IMR-90 (cell line): ENCODE measurements at regions of chr4 and their contacts with region 1.

Region 1: DNA sequence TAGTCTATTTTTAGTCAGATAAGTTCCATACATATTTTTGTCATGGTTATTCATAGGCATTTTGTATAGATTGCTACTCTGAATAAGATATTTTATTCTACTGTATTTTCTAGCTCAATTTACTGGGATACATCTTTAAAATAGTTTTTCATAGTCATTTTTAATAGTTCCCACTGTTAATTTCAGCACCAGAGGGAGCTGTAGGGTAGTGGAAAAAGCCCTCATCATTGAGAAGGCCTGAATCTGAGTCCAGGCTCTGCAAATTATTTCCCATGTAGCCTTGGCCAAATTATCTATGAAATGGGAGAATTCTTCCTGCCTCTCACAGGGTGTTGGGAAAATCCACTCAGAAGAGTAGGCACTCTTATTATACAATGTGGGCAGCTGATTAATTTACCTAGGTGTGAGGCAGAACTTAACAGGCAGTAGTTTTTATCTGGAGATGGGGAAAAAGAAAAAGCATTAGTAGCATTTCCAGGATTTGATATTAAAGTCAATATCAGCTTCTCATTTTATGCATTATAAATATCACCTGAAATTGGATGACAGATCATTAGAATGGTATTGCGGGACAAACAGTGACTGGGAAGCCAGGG is 102.9 kb upstream of the PAQR3 start:
- DNase-seq: peak; percentile 22
- ATAC-seq: no peak; the same call in 1 of the 2 replicates
- H3K4me3 ChIP-seq: no peak overlapping the region
- H3K27ac ChIP-seq: no peak overlapping the region
- H3K4me1 ChIP-seq: no peaks in the 10 kb centered on the region
- H3K27me3 ChIP-seq: no peaks in the 10 kb centered on the region
- CTCF ChIP-seq: peak; percentile 48
- POLR2A ChIP-seq: no peak
- RAD21 ChIP-seq: peak; percentile 54

Region 2: GRCh38 chr4:79185526-79186045 is 143.4 kb after region 1 on chr4:
- CTCF ChIA-PET with region 1: no interaction called
- POLR2A ChIA-PET with region 1: no interaction called
- dilution Hi-C with region 1: no loop called
- in situ Hi-C with region 1: no loop called
- intact Hi-C with region 1: no loop called
- DNase-seq: no peak
- ATAC-seq: no peak
- H3K4me3 ChIP-seq: no peak overlapping the region
- H3K27ac ChIP-seq: no peak overlapping the region
- H3K4me1 ChIP-seq: no peaks in the 10 kb centered on the region
- H3K27me3 ChIP-seq: no peaks in the 10 kb centered on the region
- CTCF ChIP-seq: no peak
- POLR2A ChIP-seq: no peak
- RAD21 ChIP-seq: no peak

Region 3: GRCh38 chr4:79317711-79318110 is 275.5 kb after region 1 on chr4:
- CTCF ChIA-PET with region 1: no interaction called
- POLR2A ChIA-PET with region 1: no interaction called
- dilution Hi-C with region 1: no loop called
- in situ Hi-C with region 1: no loop called
- intact Hi-C with region 1: loop called (anchors 10 kb)
- DNase-seq: no peak
- ATAC-seq: no peak
- H3K4me3 ChIP-seq: no peak overlapping the region
- H3K27ac ChIP-seq: no peak overlapping the region
- H3K4me1 ChIP-seq: no peaks in the 10 kb centered on the region
- H3K27me3 ChIP-seq: no peaks in the 10 kb centered on the region
- CTCF ChIP-seq: no peak
- POLR2A ChIP-seq: no peak
- RAD21 ChIP-seq: no peak

Region 4: DNA sequence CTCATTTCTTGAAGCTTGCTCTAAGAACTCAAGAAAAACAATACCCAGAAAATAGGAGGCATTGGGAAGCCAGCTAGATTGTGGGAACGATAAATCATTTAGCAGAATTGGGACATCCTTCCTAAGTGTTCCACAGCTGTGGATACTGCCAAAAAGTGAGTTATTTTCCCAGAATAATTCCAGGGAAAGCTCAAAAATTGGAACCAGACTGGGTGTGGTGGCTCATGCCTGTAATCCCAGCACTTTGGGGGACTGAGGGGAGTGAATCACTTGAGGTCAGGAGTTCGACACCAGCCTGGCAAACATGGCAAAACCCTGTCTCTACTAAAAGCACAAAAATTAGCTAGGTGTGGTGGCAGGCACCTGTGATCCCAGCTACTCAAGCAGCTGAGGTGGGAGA is 434.0 kb after region 1 on chr4:
- CTCF ChIA-PET with region 1: no interaction called
- POLR2A ChIA-PET with region 1: no interaction called
- dilution Hi-C with region 1: no loop called
- in situ Hi-C with region 1: no loop called
- intact Hi-C with region 1: no loop called
- DNase-seq: no peak
- ATAC-seq: no peak
- H3K4me3 ChIP-seq: no peak overlapping the region
- H3K27ac ChIP-seq: no peak overlapping the region
- H3K4me1 ChIP-seq: no peaks in the 10 kb centered on the region
- H3K27me3 ChIP-seq: no peaks in the 10 kb centered on the region
- CTCF ChIP-seq: no peak
- POLR2A ChIP-seq: no peak
- RAD21 ChIP-seq: no peak

Region 5: GRCh38 chr4:79540143-79540542 is 498.0 kb after region 1 on chr4:
- CTCF ChIA-PET with region 1: no interaction called
- POLR2A ChIA-PET with region 1: no interaction called
- dilution Hi-C with region 1: no loop called
- in situ Hi-C with region 1: no loop called
- intact Hi-C with region 1: no loop called
- DNase-seq: no peak
- ATAC-seq: no peak
- H3K4me3 ChIP-seq: no peak overlapping the region
- H3K27ac ChIP-seq: no peak overlapping the region
- H3K4me1 ChIP-seq: no peaks in the 10 kb centered on the region
- H3K27me3 ChIP-seq: no peaks in the 10 kb centered on the region
- CTCF ChIP-seq: no peak
- POLR2A ChIP-seq: no peak
- RAD21 ChIP-seq: no peak

Region 6: GRCh38 chr4:79576429-79576753 is 534.2 kb after region 1 on chr4:
- CTCF ChIA-PET with region 1: no interaction called
- POLR2A ChIA-PET with region 1: no interaction called
- dilution Hi-C with region 1: no loop called
- in situ Hi-C with region 1: no loop called
- intact Hi-C with region 1: loop called (anchors 1 kb)
- DNase-seq: peak; percentile 18
- ATAC-seq: peak; percentile 84
- H3K4me3 ChIP-seq: no peak overlapping the region
- H3K27ac ChIP-seq: no peak overlapping the region
- H3K4me1 ChIP-seq: no peaks in the 10 kb centered on the region
- H3K27me3 ChIP-seq: no peaks in the 10 kb centered on the region
- CTCF ChIP-seq: peak; percentile 36
- POLR2A ChIP-seq: no peak
- RAD21 ChIP-seq: peak; percentile 44

Region 7: GRCh38 chr4:79898055-79898454 is 855.9 kb after region 1 on chr4:
- CTCF ChIA-PET with region 1: no interaction called
- POLR2A ChIA-PET with region 1: no interaction called
- dilution Hi-C with region 1: no loop called
- in situ Hi-C with region 1: no loop called
- intact Hi-C with region 1: loop called (anchors 5 kb)
- DNase-seq: no peak
- ATAC-seq: no peak
- H3K4me3 ChIP-seq: no peak overlapping the region
- H3K27ac ChIP-seq: no peak overlapping the region
- H3K4me1 ChIP-seq: no peaks in the 10 kb centered on the region
- H3K27me3 ChIP-seq: no peaks in the 10 kb centered on the region
- CTCF ChIP-seq: no peak
- POLR2A ChIP-seq: no peak
- RAD21 ChIP-seq: no peak

Region 8: DNA sequence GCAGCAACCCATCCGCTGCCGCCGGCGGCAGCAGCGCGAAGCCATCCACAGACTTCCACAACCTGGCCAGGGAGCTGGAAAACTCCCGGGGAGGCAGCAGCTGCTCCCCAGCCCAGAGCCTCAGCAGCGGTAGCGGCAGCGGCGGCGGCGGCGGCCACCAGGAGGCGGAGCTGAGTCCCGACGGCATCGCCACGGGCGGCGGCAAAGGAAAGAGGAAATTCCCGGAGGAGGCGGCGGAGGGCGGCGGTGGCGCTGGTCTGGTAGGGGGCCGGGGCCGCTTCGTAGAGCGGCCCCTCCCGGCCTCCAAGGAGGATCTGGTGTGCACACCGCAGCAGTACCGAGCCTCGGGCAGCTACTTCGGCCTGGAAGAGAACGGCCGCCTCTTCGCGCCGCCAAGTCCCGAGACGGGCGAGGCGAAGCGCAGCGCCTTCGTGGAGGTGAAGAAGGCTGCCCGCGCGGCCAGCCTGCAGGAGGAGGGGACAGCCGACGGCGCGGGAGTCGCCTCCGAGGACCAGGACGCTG is 1160.1 kb after region 1 on chr4:
- CTCF ChIA-PET with region 1: no interaction called
- POLR2A ChIA-PET with region 1: no interaction called
- dilution Hi-C with region 1: no loop called
- in situ Hi-C with region 1: loop called (anchors 25 kb)
- intact Hi-C with region 1: no loop called
- DNase-seq: peak; percentile 80
- ATAC-seq: peak; percentile 75
- H3K4me3 ChIP-seq: peak overlapping the region; percentile 66
- H3K27ac ChIP-seq: peak overlapping the region; percentile 89
- H3K4me1 ChIP-seq: peaks cover 2% of the 10 kb centered on the region; the same call in 1 of the 2 replicates
- H3K27me3 ChIP-seq: no peaks in the 10 kb centered on the region
- CTCF ChIP-seq: peak; percentile 76
- POLR2A ChIP-seq: no peak
- RAD21 ChIP-seq: peak; percentile 56

Region 9: GRCh38 chr4:80215449-80216052 is 1173.4 kb after region 1 on chr4:
- CTCF ChIA-PET with region 1: no interaction called
- POLR2A ChIA-PET with region 1: no interaction called
- dilution Hi-C with region 1: no loop called
- in situ Hi-C with region 1: loop called (anchors 25 kb)
- intact Hi-C with region 1: loop called (anchors 2 kb)
- DNase-seq: peak; percentile 64
- ATAC-seq: no peak
- H3K4me3 ChIP-seq: no peak overlapping the region
- H3K27ac ChIP-seq: no peak overlapping the region
- H3K4me1 ChIP-seq: peaks cover 9% of the 10 kb centered on the region
- H3K27me3 ChIP-seq: no peaks in the 10 kb centered on the region
- CTCF ChIP-seq: peak; percentile 74
- POLR2A ChIP-seq: no peak
- RAD21 ChIP-seq: peak; percentile 68